K562 (cell line): ENCODE measurements at regions of chr5 and their contacts with region 1.

Region 1: GRCh38 chr5:149834246-149834855 is 104.2 kb downstream of the PPARGC1B start:
- DNase-seq: peak; percentile 50 to 81 (median 58)
- ATAC-seq: peak; percentile 78
- H3K4me3 ChIP-seq: no peak overlapping the region
- H3K27ac ChIP-seq: no peak overlapping the region
- H3K4me1 ChIP-seq: peaks cover 0 to 2% of the 10 kb centered on the region in 2 experiments; a peak in 1 of 5 replicates
- H3K27me3 ChIP-seq: no peaks in the 10 kb centered on the region
- CTCF ChIP-seq: peak; percentile 72 to 86 (median 85)
- EP300 ChIP-seq: no peak
- POLR2A ChIP-seq: no peak
- RAD21 ChIP-seq: peak; percentile 82 to 85

Region 2: GRCh38 chr5:149794487-149794971 is 39.8 kb before region 1 on chr5:
- CTCF ChIA-PET with region 1: no interaction called
- POLR2A ChIA-PET with region 1: no interaction called
- in situ Hi-C with region 1: no loop called
- intact Hi-C with region 1: no loop called
- DNase-seq: no peak
- ATAC-seq: no peak
- H3K4me3 ChIP-seq: no peak overlapping the region
- H3K27ac ChIP-seq: no peak overlapping the region
- H3K4me1 ChIP-seq: peaks cover 13 to 28% of the 10 kb centered on the region in 2 experiments; a peak in 4 of 5 replicates
- H3K27me3 ChIP-seq: no peaks in the 10 kb centered on the region
- CTCF ChIP-seq: no peak
- EP300 ChIP-seq: no peak
- POLR2A ChIP-seq: no peak
- RAD21 ChIP-seq: no peak

Region 3: DNA sequence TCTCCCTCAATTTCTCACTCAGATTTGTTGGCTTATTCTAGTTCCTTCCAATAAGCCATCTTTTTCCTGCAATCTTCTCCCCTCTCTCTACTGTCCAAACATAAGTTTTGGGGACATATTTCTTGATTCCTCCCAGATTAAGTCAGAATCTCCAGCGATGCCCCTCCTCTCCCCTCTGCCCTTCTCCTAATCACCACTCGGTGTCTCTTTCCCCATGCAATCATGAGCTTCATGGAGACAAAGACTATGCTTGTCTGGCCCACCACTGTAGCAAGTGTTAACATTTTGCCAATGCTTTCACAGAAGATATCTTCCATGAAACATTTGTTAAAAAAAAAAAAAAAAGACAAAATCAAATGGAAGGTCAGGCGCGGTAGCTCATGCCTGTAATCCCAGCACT is 67.8 kb after region 1 on chr5:
- CTCF ChIA-PET with region 1: interaction called, 5 read pairs
- POLR2A ChIA-PET with region 1: no interaction called
- in situ Hi-C with region 1: no loop called
- intact Hi-C with region 1: loop called (anchors 5 kb)
- DNase-seq: peak in 1 of 4 experiments; percentile 32
- ATAC-seq: peak; percentile 83
- H3K4me3 ChIP-seq: no peak overlapping the region
- H3K27ac ChIP-seq: no peak overlapping the region
- H3K4me1 ChIP-seq: peaks cover 4 to 7% of the 10 kb centered on the region in 2 experiments; a peak in 3 of 5 replicates
- H3K27me3 ChIP-seq: no peaks in the 10 kb centered on the region
- CTCF ChIP-seq: peak; percentile 29 to 55 (median 47); a peak in 5 of 6 replicates
- EP300 ChIP-seq: no peak
- POLR2A ChIP-seq: no peak
- RAD21 ChIP-seq: peak; percentile 41 to 67

Region 4: DNA sequence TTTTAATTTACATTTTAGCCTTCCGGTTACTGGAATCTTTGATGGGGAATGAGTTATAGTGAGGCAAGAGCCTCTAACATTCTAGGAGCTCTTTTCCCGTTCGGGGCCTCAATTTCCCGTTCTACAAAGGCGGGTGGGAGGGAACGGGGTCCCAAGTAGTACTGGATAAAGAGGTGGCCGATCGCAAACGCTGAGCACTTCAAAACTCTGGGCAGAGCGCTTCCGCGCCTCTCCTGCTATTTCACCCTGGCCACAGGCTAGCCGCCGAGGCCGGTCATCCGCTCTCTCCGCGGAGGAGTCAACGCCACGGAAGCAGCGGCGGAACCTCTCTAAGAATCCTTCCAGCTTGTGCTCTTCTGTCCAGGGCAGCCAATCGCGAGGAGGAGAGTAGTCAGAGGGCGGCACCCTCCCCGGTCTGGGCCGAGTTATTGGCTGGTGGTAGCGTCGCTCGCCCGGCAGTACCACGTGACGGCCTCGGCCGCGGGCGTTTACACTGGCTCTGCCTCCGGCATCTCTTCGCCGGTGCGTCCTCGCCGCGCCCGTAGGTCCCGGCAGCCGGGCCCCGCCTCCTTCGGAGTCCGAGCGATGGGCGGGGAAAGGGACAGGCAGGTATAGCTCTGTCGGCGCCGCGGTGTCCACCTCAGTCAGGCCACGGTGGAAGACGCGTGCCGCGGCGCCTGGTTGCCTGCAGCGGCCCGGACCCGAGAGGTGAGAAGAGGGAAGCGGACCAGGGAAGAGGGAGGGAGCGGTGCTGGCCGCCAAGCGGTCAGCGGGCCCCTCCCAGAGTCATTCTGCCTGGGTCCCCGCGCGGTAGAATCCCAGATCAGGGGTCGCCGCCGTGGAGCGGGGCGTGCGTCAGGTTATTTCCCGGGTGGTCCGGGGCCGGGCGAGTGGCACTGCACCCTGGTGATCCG is 126.2 kb after region 1 on chr5 and contains the start of gene SLC26A2:
- CTCF ChIA-PET with region 1: interaction called, 59 read pairs
- POLR2A ChIA-PET with region 1: interaction called, 6 read pairs
- in situ Hi-C with region 1: no loop called
- intact Hi-C with region 1: loop called (anchors 1 kb)
- DNase-seq: peak; percentile 97 to 98 (median 98)
- ATAC-seq: peak; percentile 99
- H3K4me3 ChIP-seq: peak within 1 kb of the TSS; percentile 66
- H3K27ac ChIP-seq: peak within 1 kb of the TSS; percentile 84
- H3K4me1 ChIP-seq: peaks cover 14 to 21% of the 10 kb centered on the region in 2 experiments; a peak in 4 of 5 replicates
- H3K27me3 ChIP-seq: no peaks in the 10 kb centered on the region
- CTCF ChIP-seq: no peak
- EP300 ChIP-seq: no peak
- POLR2A ChIP-seq: peak; percentile 92
- RAD21 ChIP-seq: no peak
- polyA plus RNA-seq, gene SLC26A2: 1.1 to 2.0 TPM

Region 5: DNA sequence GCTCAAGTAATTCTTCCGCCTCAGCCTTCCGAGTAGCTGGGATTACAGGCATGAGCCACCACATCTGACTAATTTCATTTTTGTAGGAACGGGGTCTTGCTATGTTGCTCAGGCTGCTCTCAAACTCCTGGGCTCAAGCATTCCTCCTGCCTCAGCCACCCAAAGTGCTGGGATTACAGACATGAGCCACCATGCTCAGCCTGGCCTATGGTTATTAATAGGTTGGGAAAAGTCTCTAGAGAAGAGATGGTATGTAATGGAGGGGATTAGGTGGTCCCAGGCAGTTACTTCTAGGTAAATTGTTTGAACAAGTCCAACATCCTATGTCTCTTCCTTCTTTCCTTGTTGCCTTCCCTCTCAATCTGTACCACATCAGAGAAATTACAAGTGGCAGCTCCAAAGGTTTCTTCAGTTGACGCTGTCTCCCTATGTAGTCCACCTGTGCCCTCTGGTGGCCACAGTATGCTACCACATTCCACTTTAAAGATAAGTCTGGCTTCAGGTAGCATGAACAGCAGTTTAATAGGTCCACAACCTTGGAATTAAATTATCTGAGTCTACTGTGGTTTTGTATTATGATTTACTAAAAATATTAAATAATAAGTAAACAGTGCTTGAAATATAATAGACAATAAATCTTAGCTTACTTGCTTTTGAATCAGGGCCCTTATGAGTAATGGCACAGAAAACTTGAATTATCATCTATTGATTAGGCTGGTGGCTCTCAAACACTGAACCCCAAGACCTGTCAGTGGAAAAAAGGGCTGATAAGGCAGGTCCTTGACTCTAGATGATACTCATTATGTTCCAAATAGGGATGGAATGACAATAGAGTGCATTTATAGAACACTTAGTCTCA is 156.4 kb after region 1 on chr5:
- CTCF ChIA-PET with region 1: interaction called, 102 read pairs
- POLR2A ChIA-PET with region 1: interaction called, 4 read pairs
- in situ Hi-C with region 1: loop called (anchors 5 kb)
- intact Hi-C with region 1: loop called (anchors 1 kb)
- DNase-seq: peak; percentile 69 to 83 (median 73)
- ATAC-seq: peak; percentile 92
- H3K4me3 ChIP-seq: no peak overlapping the region
- H3K27ac ChIP-seq: no peak overlapping the region
- H3K4me1 ChIP-seq: no peaks in the 10 kb centered on the region; a peak in 2 of 5 replicates
- H3K27me3 ChIP-seq: no peaks in the 10 kb centered on the region
- CTCF ChIP-seq: peak; percentile 87 to 97 (median 91)
- EP300 ChIP-seq: no peak
- POLR2A ChIP-seq: no peak
- RAD21 ChIP-seq: peak; percentile 94 to 97

Region 6: GRCh38 chr5:150129813-150130492 is 295.6 kb after region 1 on chr5:
- CTCF ChIA-PET with region 1: no interaction called
- POLR2A ChIA-PET with region 1: no interaction called
- in situ Hi-C with region 1: no loop called
- intact Hi-C with region 1: loop called (anchors 10 kb)
- DNase-seq: peak; percentile 82 to 91 (median 89)
- ATAC-seq: peak; percentile 93
- H3K4me3 ChIP-seq: peak overlapping the region; percentile 14; the same call in 1 of the 2 replicates
- H3K27ac ChIP-seq: no peak overlapping the region
- H3K4me1 ChIP-seq: peaks cover 8 to 11% of the 10 kb centered on the region in 2 experiments; a peak in 4 of 5 replicates
- H3K27me3 ChIP-seq: peaks cover 5 to 20% of the 10 kb centered on the region in 2 experiments; a peak in 4 of 5 replicates
- CTCF ChIP-seq: peak; percentile 87 to 98 (median 97)
- EP300 ChIP-seq: no peak
- POLR2A ChIP-seq: no peak
- RAD21 ChIP-seq: peak; percentile 97

Region 7: GRCh38 chr5:150217873-150218692 is 383.7 kb after region 1 on chr5:
- CTCF ChIA-PET with region 1: interaction called, 8 read pairs
- POLR2A ChIA-PET with region 1: no interaction called
- in situ Hi-C with region 1: no loop called
- intact Hi-C with region 1: loop called (anchors 5 kb)
- DNase-seq: peak; percentile 82 to 89 (median 88)
- ATAC-seq: peak; percentile 97
- H3K4me3 ChIP-seq: no peak overlapping the region
- H3K27ac ChIP-seq: no peak overlapping the region
- H3K4me1 ChIP-seq: peaks cover 3 to 4% of the 10 kb centered on the region in 2 experiments; a peak in 3 of 5 replicates
- H3K27me3 ChIP-seq: peaks cover 13 to 34% of the 10 kb centered on the region in 2 experiments; a peak in 4 of 5 replicates
- CTCF ChIP-seq: peak; percentile 89 to 94 (median 90)
- EP300 ChIP-seq: no peak
- POLR2A ChIP-seq: no peak
- RAD21 ChIP-seq: peak; percentile 96